ENCODE measurements at regions of chr12 and their contacts with region 1.

Region 1: GRCh38 chr12:115998119-115998633 is 279.3 kb downstream of the MED13L start:
- DNase-seq: no peak
- ATAC-seq: peak; percentile 33
- H3K4me3 Mint-ChIP-seq: no peak overlapping the region
- H3K27ac Mint-ChIP-seq: no peak overlapping the region
- H3K4me1 Mint-ChIP-seq: peaks cover 3% of the 10 kb centered on the region
- H3K27me3 Mint-ChIP-seq: no peaks in the 10 kb centered on the region

Region 2: GRCh38 chr12:115979351-115979750 is 18.8 kb before region 1 on chr12:
- CTCF ChIA-PET with region 1: interaction called, 11 read pairs
- DNase-seq: no peak
- ATAC-seq: no peak
- H3K4me3 Mint-ChIP-seq: no peak overlapping the region
- H3K27ac Mint-ChIP-seq: no peak overlapping the region
- H3K4me1 Mint-ChIP-seq: no peaks in the 10 kb centered on the region
- H3K27me3 Mint-ChIP-seq: no peaks in the 10 kb centered on the region

Region 3: DNA sequence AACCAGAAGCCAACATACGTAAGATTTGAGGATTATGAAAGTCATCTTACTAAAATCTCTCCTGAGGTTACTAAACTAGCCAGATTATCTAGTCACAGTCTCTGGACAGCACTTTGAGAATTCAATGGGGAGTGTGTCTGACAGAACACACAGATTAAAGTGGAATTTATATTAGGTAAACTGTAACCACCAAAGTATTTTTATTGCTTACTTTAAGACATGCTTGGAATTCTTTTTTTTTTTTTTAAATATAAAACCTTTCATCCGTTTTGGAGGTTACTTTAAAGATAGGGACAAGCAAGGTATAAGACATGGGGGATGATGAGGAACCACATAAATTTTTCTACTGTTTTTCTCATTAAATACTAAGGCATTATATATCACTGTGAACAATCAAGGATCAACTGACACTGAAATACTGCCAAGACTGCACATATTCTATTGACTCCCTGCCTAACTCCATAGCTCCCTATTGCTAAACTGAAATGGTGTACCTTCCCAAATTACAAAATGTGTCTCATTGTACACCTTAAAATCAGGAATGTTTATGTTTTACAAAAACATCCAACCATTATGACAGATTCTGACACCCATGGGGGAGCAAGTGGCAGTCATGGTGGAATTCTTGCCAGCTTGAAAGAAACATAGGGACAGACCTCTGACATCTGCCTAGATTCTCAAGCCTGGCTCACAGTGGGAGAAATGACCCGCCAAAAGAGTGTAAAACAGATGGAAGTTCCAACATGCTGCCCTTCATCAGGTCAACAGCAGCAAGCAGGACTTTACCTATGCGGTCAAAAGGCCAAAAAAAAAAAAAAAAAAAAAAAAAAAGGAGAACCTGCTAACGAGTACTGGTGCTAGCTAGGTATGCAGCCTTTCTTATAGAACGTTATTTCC is 40.0 kb after region 1 on chr12:
- CTCF ChIA-PET with region 1: no interaction called
- DNase-seq: no peak
- ATAC-seq: no peak
- H3K4me3 Mint-ChIP-seq: no peak overlapping the region
- H3K27ac Mint-ChIP-seq: no peak overlapping the region
- H3K4me1 Mint-ChIP-seq: no peaks in the 10 kb centered on the region
- H3K27me3 Mint-ChIP-seq: no peaks in the 10 kb centered on the region

Measured in activated CD8-positive, alpha-beta memory T cell treated with anti-CD3 and anti-CD28 coated beads, Interleukin-2, amount 10 ng/mL, durations not matched to agents 7 days and 5 days (primary cell).